Activated CD4-positive, alpha-beta T cell treated with anti-CD3 and anti-CD28 coated beads, Interleukin-2, amount 10 ng/mL, durations not matched to agents 24 days and 14 days (primary cell): ENCODE measurements at regions of chr21 and their contacts with region 1.

Region 1: DNA sequence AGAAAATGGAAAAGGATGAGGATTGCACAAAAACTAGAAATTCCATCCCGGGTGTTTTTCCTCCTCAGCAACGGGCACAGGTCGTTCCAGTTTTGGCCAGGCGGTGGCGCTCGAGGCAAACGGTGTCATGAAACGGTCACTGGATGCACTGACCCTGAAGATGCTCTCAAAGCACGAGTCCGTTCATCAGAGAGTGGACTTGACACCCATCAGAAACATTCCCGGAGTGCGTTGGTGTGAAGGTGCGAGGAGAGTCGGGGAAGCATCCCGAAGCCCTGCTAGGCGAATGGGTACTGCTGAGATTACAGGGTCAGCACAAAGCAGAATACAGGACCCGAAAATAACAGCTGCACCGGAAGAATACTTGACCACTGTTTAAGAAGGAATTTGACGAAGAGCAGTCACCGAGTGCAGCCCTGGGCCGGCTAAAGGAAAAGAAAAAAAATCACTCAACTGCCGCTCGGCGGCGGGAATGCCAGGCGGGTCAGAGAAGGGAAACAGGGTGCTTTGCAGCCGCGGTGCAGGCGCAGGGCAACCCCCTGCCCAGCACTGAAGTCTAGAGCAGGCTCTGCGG is 71.7 kb upstream of the ETS2 start:
- DNase-seq: peak; percentile 92
- H3K4me3 Mint-ChIP-seq: peak overlapping the region; percentile 83
- H3K27ac Mint-ChIP-seq: no peak overlapping the region
- H3K4me1 Mint-ChIP-seq: peaks cover 14% of the 10 kb centered on the region
- H3K27me3 Mint-ChIP-seq: peaks cover 33% of the 10 kb centered on the region

Region 2: GRCh38 chr21:38505654-38506515 is 228.2 kb before region 1 on chr21:
- intact Hi-C with region 1: loop called (anchors 5 kb)
- DNase-seq: peak; percentile 81
- H3K4me3 Mint-ChIP-seq: no peak overlapping the region
- H3K27ac Mint-ChIP-seq: no peak overlapping the region
- H3K4me1 Mint-ChIP-seq: peaks cover 13% of the 10 kb centered on the region
- H3K27me3 Mint-ChIP-seq: peaks cover 19% of the 10 kb centered on the region

Region 3: DNA sequence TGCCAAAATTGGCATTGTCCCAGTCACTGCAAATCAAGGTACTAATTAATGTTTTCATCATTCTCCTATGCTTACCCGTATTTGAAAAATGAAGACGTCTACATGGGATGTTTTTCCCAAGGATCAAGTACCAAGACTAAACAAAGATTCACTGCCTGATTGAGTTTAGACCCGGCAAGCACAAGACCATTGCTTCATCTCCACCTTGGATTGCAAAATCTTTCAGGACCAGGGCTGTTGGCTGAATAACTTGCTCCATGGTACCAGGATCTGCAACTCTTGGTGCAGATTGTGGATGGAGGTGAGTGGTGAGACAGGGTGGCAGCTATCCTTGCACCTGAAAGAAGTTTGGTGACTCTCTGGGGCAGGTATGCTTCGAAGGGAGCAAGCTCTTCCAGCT is 50.8 kb before region 1 on chr21:
- intact Hi-C with region 1: no loop called
- DNase-seq: no peak
- H3K4me3 Mint-ChIP-seq: no peak overlapping the region
- H3K27ac Mint-ChIP-seq: no peak overlapping the region
- H3K4me1 Mint-ChIP-seq: peaks cover 2% of the 10 kb centered on the region
- H3K27me3 Mint-ChIP-seq: peaks cover 6% of the 10 kb centered on the region

Region 4: GRCh38 chr21:38805328-38806152 is 71.5 kb after region 1 on chr21 and contains the start of gene ETS2:
- intact Hi-C with region 1: loop called (anchors 2 kb)
- DNase-seq: peak; percentile 93
- H3K4me3 Mint-ChIP-seq: peak within 1 kb of the TSS; percentile 86
- H3K27ac Mint-ChIP-seq: peak within 1 kb of the TSS; percentile 95
- H3K4me1 Mint-ChIP-seq: peaks cover 29% of the 10 kb centered on the region
- H3K27me3 Mint-ChIP-seq: peaks cover 6% of the 10 kb centered on the region
- total RNA-seq, gene ETS2: 28.6 and 30.4 TPM in 2 replicates

Region 5: GRCh38 chr21:38913120-38913892 is 179.2 kb after region 1 on chr21:
- intact Hi-C with region 1: loop called (anchors 10 kb)
- DNase-seq: no peak
- H3K4me3 Mint-ChIP-seq: no peak overlapping the region
- H3K27ac Mint-ChIP-seq: no peak overlapping the region
- H3K4me1 Mint-ChIP-seq: peaks cover 4% of the 10 kb centered on the region
- H3K27me3 Mint-ChIP-seq: peaks cover 11% of the 10 kb centered on the region

Region 6: GRCh38 chr21:39125752-39126485 is 391.9 kb after region 1 on chr21:
- intact Hi-C with region 1: loop called (anchors 2 kb)
- DNase-seq: peak; percentile 73
- H3K4me3 Mint-ChIP-seq: no peak overlapping the region
- H3K27ac Mint-ChIP-seq: no peak overlapping the region
- H3K4me1 Mint-ChIP-seq: peaks cover 9% of the 10 kb centered on the region
- H3K27me3 Mint-ChIP-seq: peaks cover 22% of the 10 kb centered on the region

Region 7: GRCh38 chr21:39137248-39138178 is 403.5 kb after region 1 on chr21:
- intact Hi-C with region 1: loop called (anchors 1 kb)
- DNase-seq: no peak
- H3K4me3 Mint-ChIP-seq: no peak overlapping the region
- H3K27ac Mint-ChIP-seq: no peak overlapping the region
- H3K4me1 Mint-ChIP-seq: no peaks in the 10 kb centered on the region
- H3K27me3 Mint-ChIP-seq: peaks cover 2% of the 10 kb centered on the region